ENCODE measurements at regions of chr9 and their contacts with region 1.

Region 1: DNA sequence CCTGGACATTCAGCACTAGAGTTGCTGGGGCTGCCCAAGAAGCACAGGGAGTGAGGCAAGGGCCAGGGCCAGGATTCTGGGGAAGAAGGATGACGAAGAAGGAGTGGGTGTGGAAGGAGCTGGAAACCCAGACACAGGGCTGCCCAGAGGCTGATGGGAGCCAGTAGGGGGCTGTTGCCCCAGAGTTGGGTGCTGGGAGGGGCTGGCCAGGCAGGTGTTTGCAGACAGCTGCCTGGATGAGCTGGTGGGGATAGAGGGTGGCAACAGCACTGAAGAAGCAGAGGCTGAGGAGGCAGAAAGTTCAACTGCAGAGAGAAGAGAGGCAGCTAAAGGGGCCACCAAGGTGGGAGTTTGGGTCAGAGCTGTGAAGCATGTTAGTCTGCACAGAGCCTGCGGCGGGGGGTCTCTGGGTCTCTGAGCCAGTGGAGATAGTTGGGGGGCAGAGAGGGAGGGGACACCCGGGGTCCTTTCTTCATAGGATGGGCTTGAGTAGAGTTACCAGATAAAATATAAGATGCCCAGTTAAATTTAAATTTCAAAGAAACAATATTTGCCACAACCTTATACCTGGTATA is 2.5 kb upstream of the AQP7 start:
- DNase-seq: no peak
- H3K4me3 ChIP-seq: no peak overlapping the region
- H3K4me3 Mint-ChIP-seq: no peak overlapping the region
- H3K27ac Mint-ChIP-seq: no peak overlapping the region
- H3K4me1 ChIP-seq: 0 out of 2 replicates have a peak, but pooled peaks cover 3% of the 10 kb centered on the region
- H3K4me1 Mint-ChIP-seq: peaks cover 11% of the 10 kb centered on the region
- H3K27me3 ChIP-seq: no peaks in the 10 kb centered on the region
- H3K27me3 Mint-ChIP-seq: no peaks in the 10 kb centered on the region
- CTCF ChIP-seq: peak in 1 of 2 experiments; percentile 16

Region 2: DNA sequence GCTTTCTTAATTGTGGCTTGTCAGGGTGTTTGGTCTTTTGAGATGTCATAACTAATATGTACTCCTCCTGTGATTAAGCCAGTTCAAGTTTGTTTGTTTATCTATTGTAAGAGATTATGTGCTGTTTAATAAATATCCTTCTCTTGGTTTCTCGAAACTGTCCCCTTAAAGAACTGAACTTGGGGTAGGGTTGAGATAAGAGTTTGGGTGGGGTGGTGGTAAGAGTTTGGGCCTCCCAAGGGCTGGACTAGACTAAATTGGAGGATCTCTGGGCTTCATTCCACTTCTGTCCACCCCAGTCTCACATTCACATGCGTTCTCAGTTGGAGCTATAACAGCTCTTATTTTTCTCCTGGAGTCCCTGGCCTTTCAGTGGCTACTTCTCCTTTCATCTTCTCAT is 40.7 kb before region 1 on chr9:
- CTCF ChIA-PET with region 1: no interaction called
- POLR2A ChIA-PET with region 1: no interaction called
- intact Hi-C with region 1: no loop called
- DNase-seq: no peak
- H3K4me3 ChIP-seq: no peak overlapping the region
- H3K4me3 Mint-ChIP-seq: no peak overlapping the region
- H3K27ac Mint-ChIP-seq: no peak overlapping the region
- H3K4me1 ChIP-seq: no peaks in the 10 kb centered on the region
- H3K4me1 Mint-ChIP-seq: no peaks in the 10 kb centered on the region
- H3K27me3 ChIP-seq: no peaks in the 10 kb centered on the region
- H3K27me3 Mint-ChIP-seq: no peaks in the 10 kb centered on the region
- CTCF ChIP-seq: no peak

Region 3: DNA sequence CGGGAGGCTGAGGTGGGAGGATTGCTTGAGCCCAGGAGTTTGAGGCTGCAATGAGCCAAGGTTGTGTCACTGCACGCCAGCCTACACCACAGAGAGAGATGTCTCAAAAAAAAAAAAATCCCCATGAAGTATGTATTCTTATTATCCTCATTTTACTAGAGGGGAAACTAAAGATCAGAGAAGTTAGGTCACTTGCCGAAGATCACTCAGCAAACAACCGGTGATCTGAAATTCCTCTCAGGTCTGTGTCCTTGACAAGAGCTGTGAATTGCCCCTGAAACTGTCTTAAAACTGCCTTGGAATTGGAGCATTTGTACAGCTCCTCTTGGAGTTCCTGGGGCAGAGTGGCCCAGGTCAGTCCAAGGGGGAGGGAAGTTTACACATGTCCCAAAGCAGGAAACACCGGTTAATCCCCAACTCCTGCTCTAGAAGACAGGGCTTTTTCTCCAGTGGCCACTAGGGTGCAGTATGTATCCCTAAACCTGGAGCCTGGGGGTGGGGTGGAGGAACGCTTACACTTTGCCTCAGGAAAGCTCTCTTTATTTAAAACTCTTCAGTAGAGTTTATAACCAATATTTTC is 30.2 kb before region 1 on chr9:
- CTCF ChIA-PET with region 1: interaction called, 18 read pairs
- POLR2A ChIA-PET with region 1: no interaction called
- intact Hi-C with region 1: loop called (anchors 1 kb)
- DNase-seq: peak; percentile 82 to 84
- H3K4me3 ChIP-seq: no peak overlapping the region
- H3K4me3 Mint-ChIP-seq: no peak overlapping the region
- H3K27ac Mint-ChIP-seq: no peak overlapping the region
- H3K4me1 ChIP-seq: peaks cover 27% of the 10 kb centered on the region
- H3K4me1 Mint-ChIP-seq: peaks cover 22% of the 10 kb centered on the region
- H3K27me3 ChIP-seq: no peaks in the 10 kb centered on the region
- H3K27me3 Mint-ChIP-seq: no peaks in the 10 kb centered on the region
- CTCF ChIP-seq: peak; percentile 75 to 91

Region 4: DNA sequence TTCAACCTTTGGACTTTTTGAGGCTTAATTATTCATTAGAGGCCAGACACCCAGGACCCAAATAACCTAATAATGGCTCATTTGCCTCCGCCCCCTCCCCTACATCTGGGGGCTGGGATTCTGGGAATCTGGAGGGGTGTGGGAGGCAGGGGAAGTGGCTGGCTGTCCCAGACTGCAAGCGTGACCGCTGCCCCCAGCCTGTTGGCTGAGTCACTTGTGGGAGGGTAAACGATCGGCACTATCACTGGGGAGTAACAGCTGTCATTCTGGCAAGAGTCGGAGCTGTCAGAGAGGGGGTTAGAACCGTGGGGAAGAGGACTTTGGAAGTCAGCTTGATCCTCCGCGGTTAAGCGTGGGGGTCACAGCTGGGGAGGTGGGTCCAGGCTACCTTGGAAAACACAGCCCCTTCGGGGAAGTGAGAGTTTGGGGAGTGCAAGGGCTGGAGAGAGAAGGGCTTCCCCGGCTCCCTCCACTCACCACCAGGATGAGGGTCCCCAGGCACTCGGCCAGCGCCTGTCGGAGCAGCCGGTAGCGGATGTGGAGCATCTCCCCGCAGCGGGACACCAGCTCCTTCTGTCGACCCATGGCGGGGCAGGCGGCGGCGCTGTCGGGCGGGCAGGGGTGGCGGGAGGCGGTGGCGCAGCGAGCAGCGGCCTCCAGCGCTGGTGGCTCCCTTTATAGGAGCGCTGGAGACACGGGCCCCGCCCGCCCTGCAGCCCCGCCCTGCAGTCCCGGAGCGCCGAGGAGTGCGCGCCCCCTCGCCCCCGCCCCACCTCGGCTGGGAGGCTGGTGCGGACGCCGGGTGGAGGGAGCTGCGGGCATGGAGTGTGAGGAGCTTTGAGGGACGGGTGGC is 42.3 kb after region 1 on chr9 and contains the start of gene AQP3:
- CTCF ChIA-PET with region 1: interaction called, 29 read pairs
- POLR2A ChIA-PET with region 1: interaction called, 3 read pairs
- intact Hi-C with region 1: loop called (anchors 1 kb)
- DNase-seq: peak; percentile 82 to 85
- H3K4me3 ChIP-seq: peak within 1 kb of the TSS; percentile 62
- H3K4me3 Mint-ChIP-seq: peak within 1 kb of the TSS; percentile 77
- H3K27ac Mint-ChIP-seq: peak within 1 kb of the TSS; percentile 62
- H3K4me1 ChIP-seq: peaks cover 49% of the 10 kb centered on the region
- H3K4me1 Mint-ChIP-seq: peaks cover 30% of the 10 kb centered on the region
- H3K27me3 ChIP-seq: no peaks in the 10 kb centered on the region
- H3K27me3 Mint-ChIP-seq: no peaks in the 10 kb centered on the region
- CTCF ChIP-seq: peak; percentile 33
- total RNA-seq, gene AQP3: 24.1 and 24.8 TPM in 2 replicates

Region 5: DNA sequence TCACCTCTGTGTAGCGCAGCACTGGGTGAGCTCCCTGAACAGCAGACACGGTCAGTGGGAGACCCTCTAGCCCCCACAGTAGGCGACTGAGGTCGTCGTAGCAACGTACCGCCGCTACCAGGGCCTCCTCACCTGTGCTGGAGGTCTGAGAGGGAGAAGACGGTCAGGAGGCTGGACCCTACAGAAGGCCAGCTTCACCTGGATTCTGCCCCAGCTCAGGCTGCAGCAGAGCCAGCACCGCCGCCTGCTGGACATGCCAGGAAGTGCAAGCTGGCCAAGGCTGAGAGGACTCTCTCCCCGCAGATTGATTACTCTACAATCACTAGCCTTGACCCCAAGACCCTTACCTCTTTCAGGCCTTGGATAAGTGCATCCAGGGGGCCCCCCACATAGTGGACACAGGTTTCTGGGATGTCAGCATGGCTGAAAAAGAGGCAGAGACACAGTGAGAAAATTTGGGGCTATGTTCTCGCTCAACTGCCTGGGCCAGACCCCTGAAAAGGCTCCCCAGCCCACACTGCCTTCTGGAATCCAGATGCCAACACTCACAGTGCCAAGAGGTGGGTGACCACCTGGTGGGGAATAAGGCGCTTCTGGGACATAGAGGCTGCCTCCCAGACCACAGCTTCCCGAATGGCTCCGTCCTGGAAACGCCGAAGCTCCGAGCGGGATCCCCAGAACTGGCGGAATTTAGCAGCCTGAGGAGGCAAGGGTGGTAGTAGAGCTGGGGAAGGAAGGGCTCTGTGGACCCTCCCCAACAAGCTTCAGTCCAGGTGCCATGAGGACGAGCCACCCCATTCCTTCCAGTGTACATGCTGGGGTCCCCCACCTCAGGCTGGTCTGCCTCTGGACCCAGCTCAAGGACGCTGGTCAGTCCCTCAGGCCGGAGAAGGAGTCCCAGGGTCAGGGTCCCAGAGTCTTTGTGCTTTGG is 62.0 kb after region 1 on chr9:
- CTCF ChIA-PET with region 1: interaction called, 56 read pairs
- POLR2A ChIA-PET with region 1: no interaction called
- intact Hi-C with region 1: loop called (anchors 1 kb)
- DNase-seq: peak; percentile 67 to 84
- H3K4me3 ChIP-seq: no peak overlapping the region
- H3K4me3 Mint-ChIP-seq: no peak overlapping the region
- H3K27ac Mint-ChIP-seq: no peak overlapping the region
- H3K4me1 ChIP-seq: peaks cover under 1% of the 10 kb centered on the region; the same call in 1 of the 2 replicates
- H3K4me1 Mint-ChIP-seq: peaks cover 7% of the 10 kb centered on the region
- H3K27me3 ChIP-seq: no peaks in the 10 kb centered on the region
- H3K27me3 Mint-ChIP-seq: no peaks in the 10 kb centered on the region
- CTCF ChIP-seq: peak; percentile 96 to 97

Region 6: DNA sequence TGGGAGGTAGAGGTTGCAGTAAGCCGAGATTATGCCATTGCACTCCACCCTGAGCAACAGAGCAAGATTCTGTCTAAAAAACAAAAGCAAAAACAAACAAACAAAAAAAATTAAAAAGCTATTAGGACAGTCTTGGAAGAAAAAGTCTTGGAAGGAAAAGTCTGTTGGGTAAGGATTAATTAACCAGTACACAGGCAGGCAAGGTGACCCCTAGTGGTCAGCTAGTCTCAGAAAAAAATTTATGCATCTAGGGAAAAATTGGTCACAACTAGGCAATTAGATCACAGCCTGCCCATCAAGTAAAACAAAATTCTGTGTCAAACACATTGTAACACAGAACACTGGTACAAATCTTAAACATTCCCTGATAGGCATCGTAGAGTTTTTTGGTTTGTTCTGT is 112.5 kb after region 1 on chr9:
- CTCF ChIA-PET with region 1: no interaction called
- POLR2A ChIA-PET with region 1: no interaction called
- intact Hi-C with region 1: loop called (anchors 5 kb)
- DNase-seq: peak in 1 of 2 experiments; percentile 60
- H3K4me3 ChIP-seq: no peak overlapping the region
- H3K4me3 Mint-ChIP-seq: no peak overlapping the region
- H3K27ac Mint-ChIP-seq: no peak overlapping the region
- H3K4me1 ChIP-seq: peaks cover 28% of the 10 kb centered on the region
- H3K4me1 Mint-ChIP-seq: peaks cover 23% of the 10 kb centered on the region
- H3K27me3 ChIP-seq: no peaks in the 10 kb centered on the region
- H3K27me3 Mint-ChIP-seq: peaks cover under 1% of the 10 kb centered on the region
- CTCF ChIP-seq: peak; percentile 59 to 71

Region 7: GRCh38 chr9:33721674-33722358 is 316.9 kb after region 1 on chr9:
- CTCF ChIA-PET with region 1: no interaction called
- POLR2A ChIA-PET with region 1: no interaction called
- intact Hi-C with region 1: loop called (anchors 5 kb)
- DNase-seq: peak; percentile 82 to 90
- H3K4me3 ChIP-seq: no peak overlapping the region
- H3K4me3 Mint-ChIP-seq: no peak overlapping the region
- H3K27ac Mint-ChIP-seq: no peak overlapping the region
- H3K4me1 ChIP-seq: no peaks in the 10 kb centered on the region
- H3K4me1 Mint-ChIP-seq: no peaks in the 10 kb centered on the region
- H3K27me3 ChIP-seq: no peaks in the 10 kb centered on the region
- H3K27me3 Mint-ChIP-seq: peaks cover 11% of the 10 kb centered on the region
- CTCF ChIP-seq: peak; percentile 100

Measured in Caco-2 (cell line).